IMR-90 (cell line): ENCODE measurements at regions of chr12 and their contacts with region 1.

Region 1: GRCh38 chr12:2387103-2387834 is 334.5 kb downstream of the CACNA1C start:
- DNase-seq: peak; percentile 58
- ATAC-seq: peak; percentile 36; the same call in 1 of the 2 replicates
- H3K4me3 ChIP-seq: no peak overlapping the region
- H3K27ac ChIP-seq: no peak overlapping the region
- H3K4me1 ChIP-seq: peaks cover 9% of the 10 kb centered on the region; the same call in 1 of the 2 replicates
- H3K27me3 ChIP-seq: no peaks in the 10 kb centered on the region
- CTCF ChIP-seq: no peak
- POLR2A ChIP-seq: no peak
- RAD21 ChIP-seq: no peak

Region 2: GRCh38 chr12:2344885-2345284 is 42.4 kb before region 1 on chr12:
- CTCF ChIA-PET with region 1: interaction called, 5 read pairs
- POLR2A ChIA-PET with region 1: no interaction called
- dilution Hi-C with region 1: no loop called
- in situ Hi-C with region 1: no loop called
- intact Hi-C with region 1: loop called (anchors 5 kb)
- DNase-seq: no peak
- ATAC-seq: no peak
- H3K4me3 ChIP-seq: no peak overlapping the region
- H3K27ac ChIP-seq: no peak overlapping the region
- H3K4me1 ChIP-seq: peaks cover 40% of the 10 kb centered on the region
- H3K27me3 ChIP-seq: no peaks in the 10 kb centered on the region
- CTCF ChIP-seq: no peak
- POLR2A ChIP-seq: no peak
- RAD21 ChIP-seq: no peak